Left cardiac atrium (tissue), 4 donors: ENCODE measurements at regions of chr9 and their contacts with region 1.

Region 1: GRCh38 chr9:36328798-36329411 is 70.7 kb upstream of the GNE start:
- DNase-seq: no peak
- ATAC-seq: peak; percentile 54 to 70

Region 2: DNA sequence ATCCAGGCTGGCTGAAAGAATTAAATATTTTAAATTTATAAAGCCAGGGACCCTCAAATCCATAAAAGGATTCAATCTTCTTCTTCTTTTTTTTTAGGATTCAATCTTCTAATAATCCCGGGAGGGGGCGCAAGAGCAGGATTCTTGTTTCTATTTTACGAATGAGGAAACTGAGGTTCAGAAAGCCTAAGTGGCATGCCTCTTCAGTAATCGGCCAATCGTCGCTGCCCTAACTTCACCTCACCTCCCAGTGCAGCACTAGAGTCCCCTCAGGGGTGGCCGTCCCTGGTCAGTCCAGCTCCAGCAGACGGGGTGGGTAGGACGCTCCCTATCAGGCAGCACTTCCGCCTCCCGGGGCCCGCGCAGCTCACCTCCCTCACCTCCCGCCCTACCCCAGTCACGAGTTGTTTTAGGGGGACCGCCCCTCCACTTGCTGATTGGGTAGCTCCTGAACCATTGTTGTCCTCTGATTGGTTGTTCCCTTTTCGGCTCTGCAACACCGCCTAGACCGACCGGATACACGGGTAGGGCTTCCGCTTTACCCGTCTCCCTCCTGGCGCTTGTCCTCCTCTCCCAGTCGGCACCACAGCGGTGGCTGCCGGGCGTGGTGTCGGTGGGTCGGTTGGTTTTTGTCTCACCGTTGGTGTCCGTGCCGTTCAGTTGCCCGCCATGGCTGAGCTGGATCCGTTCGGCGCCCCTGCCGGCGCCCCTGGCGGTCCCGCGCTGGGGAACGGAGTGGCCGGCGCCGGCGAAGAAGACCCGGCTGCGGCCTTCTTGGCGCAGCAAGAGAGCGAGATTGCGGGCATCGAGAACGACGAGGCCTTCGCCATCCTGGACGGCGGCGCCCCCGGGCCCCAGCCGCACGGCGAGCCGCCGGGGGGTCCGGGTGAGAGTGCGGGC is 138.3 kb before region 1 on chr9 and contains the start of gene CLTA:
- intact Hi-C with region 1: loop called in 1 of 2 experiments (anchors 10 kb)
- DNase-seq: peak; percentile 97
- ATAC-seq: peak; percentile 99 to 100
- total RNA-seq, gene CLTA: 80.7 to 88.0 TPM

Region 3: GRCh38 chr9:36250079-36250478 is 78.8 kb before region 1 on chr9:
- intact Hi-C with region 1: loop called in 1 of 2 experiments (anchors 5 kb)
- DNase-seq: no peak
- ATAC-seq: no peak